AG04450 (cell line): ENCODE measurements at regions of chr1 and their contacts with region 1.

Region 1: GRCh38 chr1:209354111-209354839 is 229.2 kb upstream of the CAMK1G start:
- DNase-seq: peak; percentile 75
- H3K4me3 ChIP-seq: no peak overlapping the region
- H3K27ac ChIP-seq: no peak overlapping the region
- H3K27me3 ChIP-seq: no peaks in the 10 kb centered on the region
- CTCF ChIP-seq: peak; percentile 96

Region 2: GRCh38 chr1:209326831-209327230 is 27.4 kb before region 1 on chr1:
- CTCF ChIA-PET with region 1: interaction called, 15 read pairs
- POLR2A ChIA-PET with region 1: no interaction called
- DNase-seq: no peak
- H3K4me3 ChIP-seq: no peak overlapping the region
- H3K27ac ChIP-seq: no peak overlapping the region
- H3K27me3 ChIP-seq: no peaks in the 10 kb centered on the region
- CTCF ChIP-seq: no peak

Region 3: DNA sequence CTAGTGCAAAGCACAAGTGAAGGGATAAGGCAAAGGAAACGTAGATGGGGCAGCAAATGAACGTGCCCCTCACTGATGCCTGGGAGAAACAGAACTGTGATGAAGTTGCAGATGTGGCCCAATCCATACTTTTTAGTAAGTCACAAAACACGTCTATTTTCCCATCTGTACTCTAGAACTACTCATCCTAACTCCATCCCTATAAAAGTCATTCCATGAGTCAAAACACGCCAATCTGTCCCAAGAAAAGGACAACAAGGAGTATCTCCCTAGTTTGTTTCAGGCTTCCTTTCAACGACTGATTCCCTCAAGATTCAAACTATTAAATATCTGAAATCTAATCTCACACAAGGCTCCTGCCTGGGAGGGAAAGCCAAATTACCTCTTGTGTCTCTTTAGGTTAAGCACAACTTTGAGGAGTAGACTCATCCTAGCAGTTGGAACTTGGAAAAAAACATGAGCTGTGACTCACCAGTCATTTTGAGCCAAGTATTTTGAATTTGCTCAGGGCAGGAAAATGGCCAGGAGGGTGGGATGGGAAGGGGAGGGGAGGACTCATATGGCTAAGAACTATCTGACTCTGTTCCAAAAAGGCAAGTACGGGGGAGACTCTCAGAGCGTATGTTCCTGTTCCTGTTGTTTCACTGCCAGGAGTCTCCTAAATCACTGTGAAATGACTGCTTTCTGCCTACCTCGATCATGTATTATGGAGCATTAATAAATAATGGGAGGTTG is 14.8 kb after region 1 on chr1:
- CTCF ChIA-PET with region 1: interaction called, 95 read pairs
- POLR2A ChIA-PET with region 1: no interaction called
- DNase-seq: peak; percentile 83
- H3K4me3 ChIP-seq: no peak overlapping the region
- H3K27ac ChIP-seq: peak overlapping the region; percentile 70
- H3K27me3 ChIP-seq: no peaks in the 10 kb centered on the region
- CTCF ChIP-seq: no peak

Region 4: GRCh38 chr1:209387969-209388329 is 33.7 kb after region 1 on chr1:
- CTCF ChIA-PET with region 1: interaction called, 15 read pairs
- POLR2A ChIA-PET with region 1: no interaction called
- DNase-seq: no peak
- H3K4me3 ChIP-seq: no peak overlapping the region
- H3K27ac ChIP-seq: no peak overlapping the region
- H3K27me3 ChIP-seq: no peaks in the 10 kb centered on the region
- CTCF ChIP-seq: no peak

Region 5: DNA sequence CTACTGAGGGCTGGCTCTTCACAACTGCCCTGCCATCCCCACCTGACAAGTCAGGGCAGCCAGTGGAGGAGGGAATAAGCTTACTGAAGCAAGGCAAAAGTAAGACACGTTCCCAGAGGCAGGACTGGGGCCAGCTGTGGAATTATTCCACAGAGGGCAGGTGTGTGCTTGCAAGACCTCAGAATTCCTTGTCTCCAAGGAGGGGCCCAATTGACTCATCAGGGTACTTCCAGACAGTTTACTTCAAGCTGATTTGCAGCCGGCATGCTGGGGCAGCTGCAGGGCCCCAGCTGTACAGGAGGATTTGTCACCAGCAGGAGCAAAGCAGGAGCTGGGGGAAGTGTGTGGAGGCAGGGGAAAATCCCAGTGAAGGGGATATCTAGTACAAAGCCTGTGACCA is 61.8 kb after region 1 on chr1:
- CTCF ChIA-PET with region 1: interaction called, 11 read pairs
- POLR2A ChIA-PET with region 1: no interaction called
- DNase-seq: peak; percentile 42
- H3K4me3 ChIP-seq: no peak overlapping the region
- H3K27ac ChIP-seq: no peak overlapping the region
- H3K27me3 ChIP-seq: no peaks in the 10 kb centered on the region
- CTCF ChIP-seq: 0 out of 2 replicates have a peak, but pooled peaks have one; percentile 4

Region 6: GRCh38 chr1:209627732-209628196 is 273.5 kb after region 1 on chr1:
- CTCF ChIA-PET with region 1: no interaction called
- POLR2A ChIA-PET with region 1: no interaction called
- DNase-seq: no peak
- H3K4me3 ChIP-seq: no peak overlapping the region
- H3K27ac ChIP-seq: no peak overlapping the region
- H3K27me3 ChIP-seq: no peaks in the 10 kb centered on the region
- CTCF ChIP-seq: peak; percentile 97